ENCODE measurements at regions of chr10 and their contacts with region 1.

Region 1: GRCh38 chr10:72215652-72216549 is at the starts of genes ANAPC16 and ASCC1:
- DNase-seq: peak; percentile 84
- ATAC-seq: peak; percentile 90
- H3K4me3 ChIP-seq: peak within 1 kb of the TSS; percentile 89
- H3K27ac ChIP-seq: peak within 1 kb of the TSS; percentile 91
- H3K4me1 ChIP-seq: peaks cover 29% of the 10 kb centered on the region
- H3K27me3 ChIP-seq: no peaks in the 10 kb centered on the region
- CTCF ChIP-seq: no peak
- EP300 ChIP-seq: no peak
- POLR2A ChIP-seq: peak; percentile 97
- RAD21 ChIP-seq: no peak
- polyA plus RNA-seq, gene ANAPC16: 178 to 208 TPM
- polyA plus RNA-seq, gene ASCC1: 41.6 to 49.9 TPM

Region 2: GRCh38 chr10:71985542-71986250 is 230.2 kb before region 1 on chr10:
- CTCF ChIA-PET with region 1: no interaction called
- POLR2A ChIA-PET with region 1: no interaction called
- RAD21 ChIA-PET with region 1: interaction called, 5 read pairs
- SMC1A ChIA-PET with region 1: no interaction called
- in situ Hi-C with region 1: no loop called
- intact Hi-C with region 1: loop called (anchors 5 kb)
- DNase-seq: peak; percentile 73
- ATAC-seq: peak; percentile 83
- H3K4me3 ChIP-seq: no peak overlapping the region
- H3K27ac ChIP-seq: peak overlapping the region; percentile 88
- H3K4me1 ChIP-seq: peaks cover 40% of the 10 kb centered on the region
- H3K27me3 ChIP-seq: no peaks in the 10 kb centered on the region
- CTCF ChIP-seq: no peak
- EP300 ChIP-seq: 0 out of 4 replicates have a peak, but pooled peaks have one; percentile 41 to 55
- POLR2A ChIP-seq: no peak
- RAD21 ChIP-seq: no peak

Region 3: GRCh38 chr10:72173635-72174296 is 42.1 kb before region 1 on chr10:
- CTCF ChIA-PET with region 1: interaction called, 8 read pairs
- POLR2A ChIA-PET with region 1: interaction called, 15 read pairs
- RAD21 ChIA-PET with region 1: interaction called, 5 read pairs
- SMC1A ChIA-PET with region 1: interaction called, 10 read pairs
- in situ Hi-C with region 1: no loop called
- intact Hi-C with region 1: loop called (anchors 5 kb)
- DNase-seq: peak; percentile 86
- ATAC-seq: peak; percentile 91
- H3K4me3 ChIP-seq: no peak overlapping the region; the same call in 1 of the 2 replicates
- H3K27ac ChIP-seq: peak overlapping the region; percentile 67
- H3K4me1 ChIP-seq: peaks cover 35% of the 10 kb centered on the region
- H3K27me3 ChIP-seq: no peaks in the 10 kb centered on the region
- CTCF ChIP-seq: no peak
- EP300 ChIP-seq: no peak
- POLR2A ChIP-seq: no peak
- RAD21 ChIP-seq: no peak

Region 4: DNA sequence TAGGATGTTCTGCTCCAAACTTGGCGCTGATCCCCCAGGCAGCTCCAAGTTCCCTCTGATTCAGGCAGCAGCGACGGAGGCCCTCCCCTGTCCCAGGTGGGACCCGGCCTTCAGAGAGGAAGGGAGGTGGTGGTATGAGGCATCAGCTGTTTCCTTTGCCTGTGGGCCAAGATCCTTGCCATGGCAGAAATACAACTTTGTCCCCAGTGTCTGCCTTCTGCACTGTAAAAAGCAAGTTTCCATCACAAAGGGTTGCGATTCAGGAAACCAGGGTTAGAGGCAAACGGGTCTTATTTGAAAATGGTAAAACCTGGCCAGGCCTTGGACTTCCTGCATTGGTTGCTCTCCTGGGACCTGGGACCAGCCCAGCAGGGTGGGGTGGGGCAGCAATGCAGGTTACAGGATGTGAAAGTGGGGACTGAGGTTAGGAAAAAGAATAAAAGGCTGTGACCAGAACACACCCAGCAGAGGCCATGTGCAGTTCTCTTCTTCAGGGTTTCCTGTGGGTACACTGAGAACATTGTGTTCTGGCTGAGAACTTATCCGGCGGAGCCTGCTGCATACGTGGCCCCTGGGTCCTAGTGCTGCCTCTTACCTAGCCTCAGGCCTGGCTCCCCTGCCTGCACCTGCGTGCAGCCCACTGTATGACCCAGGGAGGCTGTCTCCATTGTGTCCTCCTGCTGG is 32.7 kb after region 1 on chr10:
- CTCF ChIA-PET with region 1: interaction called, 18 read pairs
- POLR2A ChIA-PET with region 1: interaction called, 19 read pairs
- RAD21 ChIA-PET with region 1: interaction called, 129 read pairs
- SMC1A ChIA-PET with region 1: interaction called, 74 read pairs
- in situ Hi-C with region 1: no loop called
- intact Hi-C with region 1: no loop called
- DNase-seq: peak; percentile 99
- ATAC-seq: peak; percentile 95
- H3K4me3 ChIP-seq: peak overlapping the region; percentile 55; the same call in 1 of the 2 replicates
- H3K27ac ChIP-seq: peak overlapping the region; percentile 97
- H3K4me1 ChIP-seq: peaks cover 72% of the 10 kb centered on the region
- H3K27me3 ChIP-seq: no peaks in the 10 kb centered on the region
- CTCF ChIP-seq: no peak
- EP300 ChIP-seq: peak; percentile 88 to 91
- POLR2A ChIP-seq: peak; percentile 89
- RAD21 ChIP-seq: no peak

Region 5: GRCh38 chr10:72260588-72261322 is 44.9 kb after region 1 on chr10:
- CTCF ChIA-PET with region 1: interaction called, 8 read pairs
- POLR2A ChIA-PET with region 1: interaction called, 82 read pairs
- RAD21 ChIA-PET with region 1: interaction called, 129 read pairs
- SMC1A ChIA-PET with region 1: interaction called, 25 read pairs
- in situ Hi-C with region 1: no loop called
- intact Hi-C with region 1: loop called (anchors 5 kb)
- DNase-seq: peak; percentile 88
- ATAC-seq: peak; percentile 80
- H3K4me3 ChIP-seq: peak overlapping the region; percentile 68
- H3K27ac ChIP-seq: peak overlapping the region; percentile 95
- H3K4me1 ChIP-seq: peaks cover 68% of the 10 kb centered on the region
- H3K27me3 ChIP-seq: no peaks in the 10 kb centered on the region
- CTCF ChIP-seq: peak in 2 of 3 experiments; percentile 15 to 39; a peak in 2 of 6 replicates
- EP300 ChIP-seq: no peak; a peak in 2 of 4 replicates
- POLR2A ChIP-seq: peak; percentile 77
- RAD21 ChIP-seq: peak; percentile 9; the same call in 1 of the 2 replicates

Region 6: GRCh38 chr10:72331601-72332422 is 115.9 kb after region 1 on chr10:
- CTCF ChIA-PET with region 1: interaction called, 24 read pairs
- POLR2A ChIA-PET with region 1: interaction called, 10 read pairs
- RAD21 ChIA-PET with region 1: interaction called, 19 read pairs
- SMC1A ChIA-PET with region 1: interaction called, 13 read pairs
- in situ Hi-C with region 1: no loop called
- intact Hi-C with region 1: loop called (anchors 2 kb)
- DNase-seq: peak; percentile 96
- ATAC-seq: peak; percentile 80
- H3K4me3 ChIP-seq: 0 out of 2 replicates have a peak overlapping the region, but pooled peaks have one; percentile 4
- H3K27ac ChIP-seq: peak overlapping the region; percentile 95
- H3K4me1 ChIP-seq: peaks cover 76% of the 10 kb centered on the region
- H3K27me3 ChIP-seq: no peaks in the 10 kb centered on the region
- CTCF ChIP-seq: peak; percentile 1 to 50 (median 13); a peak in 1 of 6 replicates
- EP300 ChIP-seq: peak; percentile 31 to 85; a peak in 3 of 4 replicates
- POLR2A ChIP-seq: peak; percentile 68
- RAD21 ChIP-seq: no peak

Region 7: GRCh38 chr10:72414642-72415041 is 198.7 kb after region 1 on chr10:
- CTCF ChIA-PET with region 1: no interaction called
- POLR2A ChIA-PET with region 1: no interaction called
- RAD21 ChIA-PET with region 1: no interaction called
- SMC1A ChIA-PET with region 1: no interaction called
- in situ Hi-C with region 1: no loop called
- intact Hi-C with region 1: no loop called
- DNase-seq: no peak
- ATAC-seq: no peak
- H3K4me3 ChIP-seq: no peak overlapping the region
- H3K27ac ChIP-seq: no peak overlapping the region
- H3K4me1 ChIP-seq: no peaks in the 10 kb centered on the region
- H3K27me3 ChIP-seq: no peaks in the 10 kb centered on the region
- CTCF ChIP-seq: no peak
- EP300 ChIP-seq: no peak
- POLR2A ChIP-seq: no peak
- RAD21 ChIP-seq: no peak